ENCODE measurements at regions of chr14 and their contacts with region 1.

Region 1: GRCh38 chr14:20613094-20614037 is 22.2 kb upstream of the RNASE12 start:
- DNase-seq: peak; percentile 91
- ATAC-seq: peak; percentile 85
- H3K4me3 Mint-ChIP-seq: no peak overlapping the region
- H3K27ac Mint-ChIP-seq: no peak overlapping the region
- H3K4me1 Mint-ChIP-seq: peaks cover 13% of the 10 kb centered on the region
- H3K27me3 Mint-ChIP-seq: no peaks in the 10 kb centered on the region
- CTCF ChIP-seq: peak; percentile 45

Region 2: DNA sequence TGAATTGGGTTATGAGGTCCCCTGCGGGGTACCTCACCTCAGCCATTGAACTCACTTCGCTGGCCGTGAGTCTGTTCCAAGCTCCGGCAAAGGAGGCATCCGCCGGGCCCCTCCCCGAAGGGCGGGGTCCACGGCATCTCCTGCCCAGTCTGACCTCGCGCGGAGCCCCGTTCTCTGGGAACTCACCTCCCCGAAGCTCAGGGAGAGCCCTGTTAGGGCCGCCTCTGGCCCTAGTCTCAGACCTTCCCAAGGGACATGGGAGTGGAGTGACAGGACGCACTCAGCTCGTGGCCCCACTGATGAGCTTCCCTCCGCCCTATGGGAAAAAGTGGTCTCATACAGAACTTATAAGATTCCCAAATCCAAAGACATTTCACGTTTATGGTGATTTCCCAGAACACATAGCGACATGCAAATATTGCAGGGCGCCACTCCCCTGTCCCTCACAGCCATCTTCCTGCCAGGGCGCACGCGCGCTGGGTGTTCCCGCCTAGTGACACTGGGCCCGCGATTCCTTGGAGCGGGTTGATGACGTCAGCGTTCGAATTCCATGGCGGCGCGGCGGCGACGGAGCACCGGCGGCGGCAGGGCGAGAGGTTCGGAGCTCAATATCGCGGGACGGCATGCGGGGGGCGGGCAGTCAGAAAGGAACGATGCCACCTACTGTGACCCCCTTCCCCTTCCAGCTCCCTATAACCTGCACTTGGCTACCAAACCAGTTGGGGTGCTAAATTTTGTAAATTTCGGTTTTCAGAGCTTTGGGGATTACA is 270.1 kb before region 1 on chr14 and contains the start of gene PARP2:
- CTCF ChIA-PET with region 1: interaction called, 13 read pairs
- POLR2A ChIA-PET with region 1: interaction called, 7 read pairs
- intact Hi-C with region 1: loop called (anchors 1 kb)
- DNase-seq: peak; percentile 96
- ATAC-seq: peak; percentile 91
- H3K4me3 Mint-ChIP-seq: peak within 1 kb of the TSS; percentile 89
- H3K27ac Mint-ChIP-seq: peak within 1 kb of the TSS; percentile 96
- H3K4me1 Mint-ChIP-seq: peaks cover 11% of the 10 kb centered on the region
- H3K27me3 Mint-ChIP-seq: no peaks in the 10 kb centered on the region
- CTCF ChIP-seq: no peak
- total RNA-seq, gene PARP2: 45.7 to 46.5 TPM

Region 3: GRCh38 chr14:20454516-20455354 is 158.6 kb before region 1 on chr14 and contains the starts of genes APEX1 and OSGEP:
- CTCF ChIA-PET with region 1: interaction called, 3 read pairs
- POLR2A ChIA-PET with region 1: interaction called, 4 read pairs
- intact Hi-C with region 1: loop called (anchors 5 kb)
- DNase-seq: peak; percentile 99
- ATAC-seq: peak; percentile 91
- H3K4me3 Mint-ChIP-seq: no peak within 1 kb of the TSS
- H3K27ac Mint-ChIP-seq: no peak within 1 kb of the TSS
- H3K4me1 Mint-ChIP-seq: peaks cover 19% of the 10 kb centered on the region
- H3K27me3 Mint-ChIP-seq: no peaks in the 10 kb centered on the region
- CTCF ChIP-seq: no peak
- total RNA-seq, gene APEX1: 196 to 211 TPM
- total RNA-seq, gene OSGEP: 39.5 to 40.7 TPM

Region 4: GRCh38 chr14:20623798-20624197 is 10.4 kb after region 1 on chr14:
- CTCF ChIA-PET with region 1: interaction called, 13 read pairs
- POLR2A ChIA-PET with region 1: interaction called, 11 read pairs
- intact Hi-C with region 1: no loop called
- DNase-seq: peak; percentile 29
- ATAC-seq: no peak
- H3K4me3 Mint-ChIP-seq: peak overlapping the region; percentile 74
- H3K27ac Mint-ChIP-seq: no peak overlapping the region
- H3K4me1 Mint-ChIP-seq: peaks cover 53% of the 10 kb centered on the region
- H3K27me3 Mint-ChIP-seq: peaks cover 33% of the 10 kb centered on the region
- CTCF ChIP-seq: no peak

Region 5: DNA sequence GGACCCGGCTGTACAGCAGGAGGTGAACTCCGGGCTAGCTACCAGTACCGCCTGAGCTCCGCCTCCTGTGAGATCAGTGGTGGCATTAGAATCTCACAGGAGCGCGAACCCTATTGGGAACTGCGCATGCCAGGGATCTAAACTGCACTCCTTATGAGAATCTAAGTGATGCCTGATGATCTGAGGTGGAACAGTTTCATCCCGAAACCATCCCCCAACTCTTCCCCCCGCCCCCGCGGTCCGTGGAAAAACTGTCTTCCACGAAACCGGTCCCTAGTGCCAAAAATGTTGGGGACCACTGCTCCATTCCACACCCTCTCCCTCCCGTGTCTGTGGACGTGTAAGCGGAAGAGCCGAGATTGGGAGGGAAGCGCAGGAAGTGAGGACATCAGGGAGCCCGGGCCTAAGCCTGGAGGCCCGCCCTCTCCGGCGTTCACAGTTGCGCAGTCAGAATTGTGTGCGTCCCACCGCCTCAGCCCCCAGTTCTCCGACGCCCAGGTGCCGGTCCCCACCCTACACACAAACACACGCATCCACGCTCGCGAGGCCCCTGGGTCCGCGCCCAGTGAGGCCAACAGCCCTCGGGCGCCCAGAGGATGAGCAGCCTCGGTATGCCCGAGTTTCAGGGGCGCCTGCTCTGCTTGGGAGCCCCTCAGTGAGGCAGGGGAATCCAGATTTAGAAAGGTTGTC is 69.2 kb after region 1 on chr14:
- CTCF ChIA-PET with region 1: interaction called, 43 read pairs
- POLR2A ChIA-PET with region 1: interaction called, 4 read pairs
- intact Hi-C with region 1: loop called (anchors 1 kb)
- DNase-seq: peak; percentile 86
- ATAC-seq: peak; percentile 69
- H3K4me3 Mint-ChIP-seq: no peak overlapping the region
- H3K27ac Mint-ChIP-seq: no peak overlapping the region
- H3K4me1 Mint-ChIP-seq: peaks cover 19% of the 10 kb centered on the region
- H3K27me3 Mint-ChIP-seq: no peaks in the 10 kb centered on the region
- CTCF ChIP-seq: no peak

Region 6: GRCh38 chr14:20697273-20698017 is 84.1 kb after region 1 on chr14:
- CTCF ChIA-PET with region 1: interaction called, 30 read pairs
- POLR2A ChIA-PET with region 1: no interaction called
- intact Hi-C with region 1: no loop called
- DNase-seq: peak; percentile 78
- ATAC-seq: peak; percentile 93
- H3K4me3 Mint-ChIP-seq: no peak overlapping the region
- H3K27ac Mint-ChIP-seq: no peak overlapping the region
- H3K4me1 Mint-ChIP-seq: peaks cover under 1% of the 10 kb centered on the region
- H3K27me3 Mint-ChIP-seq: peaks cover 4% of the 10 kb centered on the region
- CTCF ChIP-seq: peak; percentile 75

Measured in activated CD8-positive, alpha-beta T cell treated with anti-CD3 and anti-CD28 coated beads for 36 hours (primary cell).